T-cell (primary cell): ENCODE measurements at regions of chr20 and their contacts with region 1.

Region 1: DNA sequence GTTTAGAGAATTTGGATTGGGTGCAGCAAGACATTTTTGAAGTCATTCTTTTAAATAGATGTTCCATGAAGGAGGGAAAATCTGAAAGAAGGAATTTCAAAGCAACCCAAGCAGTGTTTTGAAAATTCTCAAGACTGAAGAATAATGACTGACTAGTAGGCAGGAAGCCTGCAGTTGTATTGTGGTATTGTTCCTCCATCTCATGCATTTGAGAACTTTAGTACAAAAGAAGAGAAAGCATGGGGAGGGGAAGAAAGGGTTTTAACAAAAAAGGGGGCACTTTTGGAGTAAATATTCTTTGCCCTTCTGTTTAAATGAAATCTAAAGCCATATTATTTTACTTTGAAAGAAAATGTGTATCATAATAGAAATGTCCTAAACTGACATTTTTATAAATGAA is 6.6 kb downstream of the NCOA3 start:
- DNase-seq: peak in 1 of 35 experiments; percentile 33
- ATAC-seq: peak in 3 of 4 experiments; percentile 65 to 79 (median 67)
- H3K4me3 ChIP-seq: no peak overlapping the region
- H3K4me3 Mint-ChIP-seq: peak overlapping the region; percentile 25 to 63 (median 35)
- H3K27ac ChIP-seq: no peak overlapping the region
- H3K27ac Mint-ChIP-seq: peak overlapping the region; percentile 69 to 74
- H3K4me1 ChIP-seq: peaks cover 39 to 40% of the 10 kb centered on the region in 2 experiments
- H3K4me1 Mint-ChIP-seq: peaks cover 79 to 84% (median 82%) of the 10 kb centered on the region in 3 donors
- H3K27me3 ChIP-seq: no peaks in the 10 kb centered on the region
- H3K27me3 Mint-ChIP-seq: no peaks in the 10 kb centered on the region

Region 2: GRCh38 chr20:47540443-47541354 is 32.4 kb after region 1 on chr20:
- CTCF ChIA-PET with region 1: no interaction called
- POLR2A ChIA-PET with region 1: interaction called in 1 of 2 experiments, 16 read pairs
- DNase-seq: no peak
- ATAC-seq: no peak
- H3K4me3 ChIP-seq: no peak overlapping the region
- H3K4me3 Mint-ChIP-seq: no peak overlapping the region
- H3K27ac ChIP-seq: no peak overlapping the region
- H3K27ac Mint-ChIP-seq: peak overlapping the region; percentile 4 to 23
- H3K4me1 ChIP-seq: peaks cover 0 to 13% of the 10 kb centered on the region in 2 experiments
- H3K4me1 Mint-ChIP-seq: peaks cover 77 to 84% (median 79%) of the 10 kb centered on the region in 3 donors
- H3K27me3 ChIP-seq: no peaks in the 10 kb centered on the region
- H3K27me3 Mint-ChIP-seq: no peaks in the 10 kb centered on the region

Region 3: GRCh38 chr20:47610247-47610944 is 102.1 kb after region 1 on chr20:
- CTCF ChIA-PET with region 1: interaction called in 1 of 2 experiments, 3 read pairs
- POLR2A ChIA-PET with region 1: interaction called in 1 of 2 experiments, 12 read pairs
- DNase-seq: peak in 26 of 35 experiments; percentile 3 to 61 (median 13)
- ATAC-seq: peak; percentile 85 to 96 (median 92)
- H3K4me3 ChIP-seq: no peak overlapping the region
- H3K4me3 Mint-ChIP-seq: peak overlapping the region in 2 of 3 donors; percentile 62
- H3K27ac ChIP-seq: peak overlapping the region; percentile 75
- H3K27ac Mint-ChIP-seq: peak overlapping the region; percentile 90 to 92
- H3K4me1 ChIP-seq: peaks cover 7 to 14% of the 10 kb centered on the region in 2 experiments
- H3K4me1 Mint-ChIP-seq: peaks cover 71 to 88% (median 73%) of the 10 kb centered on the region in 3 donors
- H3K27me3 ChIP-seq: no peaks in the 10 kb centered on the region
- H3K27me3 Mint-ChIP-seq: no peaks in the 10 kb centered on the region